ENCODE measurements at regions of chr18 and their contacts with region 1.

Region 1: GRCh38 chr18:7808992-7809391 is 241.9 kb downstream of the PTPRM start:
- DNase-seq: no peak
- H3K4me3 ChIP-seq: no peak overlapping the region
- H3K4me3 Mint-ChIP-seq: peak overlapping the region; percentile 67
- H3K27ac Mint-ChIP-seq: peak overlapping the region; percentile 89
- H3K4me1 ChIP-seq: peaks cover 79% of the 10 kb centered on the region
- H3K4me1 Mint-ChIP-seq: peaks cover 63% of the 10 kb centered on the region
- H3K27me3 ChIP-seq: no peaks in the 10 kb centered on the region
- H3K27me3 Mint-ChIP-seq: no peaks in the 10 kb centered on the region
- CTCF ChIP-seq: no peak

Region 2: GRCh38 chr18:7789856-7790552 is 19.0 kb before region 1 on chr18:
- CTCF ChIA-PET with region 1: interaction called, 14 read pairs
- POLR2A ChIA-PET with region 1: no interaction called
- intact Hi-C with region 1: no loop called
- DNase-seq: peak in 1 of 2 experiments; percentile 44
- H3K4me3 ChIP-seq: no peak overlapping the region
- H3K4me3 Mint-ChIP-seq: no peak overlapping the region
- H3K27ac Mint-ChIP-seq: no peak overlapping the region
- H3K4me1 ChIP-seq: peaks cover 13% of the 10 kb centered on the region
- H3K4me1 Mint-ChIP-seq: peaks cover 14% of the 10 kb centered on the region
- H3K27me3 ChIP-seq: no peaks in the 10 kb centered on the region
- H3K27me3 Mint-ChIP-seq: no peaks in the 10 kb centered on the region
- CTCF ChIP-seq: peak; percentile 52 to 56

Region 3: GRCh38 chr18:7856733-7857132 is 47.7 kb after region 1 on chr18:
- CTCF ChIA-PET with region 1: no interaction called
- POLR2A ChIA-PET with region 1: no interaction called
- intact Hi-C with region 1: loop called (anchors 5 kb)
- DNase-seq: peak; percentile 59 to 74
- H3K4me3 ChIP-seq: no peak overlapping the region
- H3K4me3 Mint-ChIP-seq: peak overlapping the region; percentile 52
- H3K27ac Mint-ChIP-seq: peak overlapping the region; percentile 67
- H3K4me1 ChIP-seq: peaks cover 28% of the 10 kb centered on the region
- H3K4me1 Mint-ChIP-seq: peaks cover 22% of the 10 kb centered on the region
- H3K27me3 ChIP-seq: no peaks in the 10 kb centered on the region
- H3K27me3 Mint-ChIP-seq: no peaks in the 10 kb centered on the region
- CTCF ChIP-seq: no peak